K562 (cell line): ENCODE measurements at regions of chr3 and their contacts with region 1.

Region 1: DNA sequence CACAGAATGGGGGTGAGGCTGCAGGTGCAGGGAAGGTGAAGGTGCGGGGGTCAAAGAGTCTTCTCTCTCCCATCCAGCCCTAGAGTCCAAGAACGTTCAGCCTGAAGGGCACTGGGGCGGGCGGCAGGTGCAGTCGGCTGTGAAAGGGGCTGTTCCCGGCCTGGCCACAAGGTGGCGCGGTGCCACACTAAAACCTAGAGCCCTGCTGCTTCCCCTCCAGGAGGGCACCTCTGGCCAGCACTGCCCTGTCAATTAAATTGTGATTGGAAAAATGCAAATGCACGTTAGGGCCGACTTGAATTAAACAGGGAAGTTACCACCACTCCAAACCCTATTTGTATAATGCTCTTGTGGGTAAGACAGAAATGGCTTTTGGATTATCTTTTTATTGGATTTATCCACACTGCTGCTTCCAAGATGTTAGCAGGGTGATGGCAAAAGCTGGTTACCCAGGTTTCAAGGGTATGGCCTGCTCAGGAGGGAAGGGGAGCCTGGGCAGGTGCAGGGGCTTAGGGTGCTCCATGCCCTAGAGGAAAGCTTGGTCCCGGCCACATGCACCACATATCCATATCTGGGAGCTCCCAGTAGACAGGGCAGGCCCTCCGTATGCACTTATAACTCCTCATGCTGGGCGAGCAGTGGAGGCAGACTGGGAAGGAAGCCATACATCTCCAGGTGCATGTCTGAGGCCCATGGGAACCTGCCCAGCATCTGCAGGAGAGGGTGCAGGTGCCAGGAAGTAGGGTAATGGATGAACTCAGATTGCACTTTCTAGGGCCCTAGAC is 119.8 kb downstream of the ADCY5 start:
- DNase-seq: peak; percentile 65 to 70 (median 67)
- ATAC-seq: peak; percentile 96
- H3K4me3 ChIP-seq: no peak overlapping the region
- H3K27ac ChIP-seq: no peak overlapping the region
- H3K4me1 ChIP-seq: peaks cover 0 to 4% of the 10 kb centered on the region in 2 experiments; a peak in 1 of 5 replicates
- H3K27me3 ChIP-seq: peaks cover 0 to 37% of the 10 kb centered on the region in 2 experiments; a peak in 3 of 5 replicates
- CTCF ChIP-seq: peak; percentile 75 to 79 (median 77)
- EP300 ChIP-seq: no peak
- POLR2A ChIP-seq: no peak
- RAD21 ChIP-seq: peak; percentile 61 to 80

Region 2: DNA sequence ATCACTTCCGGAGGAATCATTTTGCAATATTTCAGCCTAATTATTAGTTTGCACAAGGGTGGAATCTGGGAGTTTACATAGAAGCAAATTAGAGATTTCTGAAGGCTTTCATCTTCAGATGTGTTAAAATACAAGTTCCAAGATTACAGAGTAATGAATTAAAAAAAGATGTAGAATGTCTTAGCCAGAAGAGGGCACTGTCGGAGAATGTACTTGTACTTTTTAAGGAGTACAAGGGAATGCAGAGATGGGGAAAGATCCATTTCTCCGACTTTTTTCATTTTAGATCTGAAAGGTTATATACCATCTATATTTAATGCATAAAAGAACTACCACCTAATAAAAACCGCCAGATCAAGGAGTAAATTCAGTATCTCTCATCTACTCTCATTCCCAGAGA is 870.1 kb before region 1 on chr3:
- CTCF ChIA-PET with region 1: no interaction called
- POLR2A ChIA-PET with region 1: no interaction called
- in situ Hi-C with region 1: no loop called
- intact Hi-C with region 1: no loop called
- DNase-seq: peak in 1 of 4 experiments; percentile 15
- ATAC-seq: no peak
- H3K4me3 ChIP-seq: no peak overlapping the region
- H3K27ac ChIP-seq: no peak overlapping the region
- H3K4me1 ChIP-seq: no peaks in the 10 kb centered on the region
- H3K27me3 ChIP-seq: no peaks in the 10 kb centered on the region
- CTCF ChIP-seq: peak in 2 of 3 experiments; percentile 22 to 55; a peak in 3 of 6 replicates
- EP300 ChIP-seq: no peak
- POLR2A ChIP-seq: no peak
- RAD21 ChIP-seq: peak; percentile 32 to 62; a peak in 3 of 4 replicates

Region 3: DNA sequence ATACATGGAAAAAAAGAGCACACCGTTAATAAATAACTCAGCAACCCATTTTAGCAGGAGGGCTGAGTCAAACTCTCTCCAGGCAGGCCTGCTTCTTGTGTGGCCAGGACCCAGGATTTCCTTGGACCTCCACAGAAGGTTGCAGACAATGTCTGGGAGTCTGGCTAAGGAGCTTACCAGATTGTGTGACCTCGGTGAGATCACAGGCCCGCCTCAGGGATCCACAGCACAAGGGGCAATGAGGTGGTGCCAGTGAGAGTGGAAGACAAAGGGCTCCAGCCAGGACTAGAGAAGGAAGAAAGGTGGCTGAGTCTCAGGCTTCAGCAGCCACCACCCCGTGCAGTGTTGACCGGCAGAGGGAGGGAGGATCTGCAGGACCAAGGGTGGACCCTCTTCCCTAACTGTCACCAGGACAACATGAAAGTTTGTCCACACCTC is 159.5 kb before region 1 on chr3:
- CTCF ChIA-PET with region 1: no interaction called
- POLR2A ChIA-PET with region 1: no interaction called
- in situ Hi-C with region 1: no loop called
- intact Hi-C with region 1: no loop called
- DNase-seq: no peak
- ATAC-seq: no peak
- H3K4me3 ChIP-seq: no peak overlapping the region
- H3K27ac ChIP-seq: no peak overlapping the region
- H3K4me1 ChIP-seq: no peaks in the 10 kb centered on the region
- H3K27me3 ChIP-seq: no peaks in the 10 kb centered on the region
- CTCF ChIP-seq: no peak
- EP300 ChIP-seq: no peak
- POLR2A ChIP-seq: no peak
- RAD21 ChIP-seq: no peak

Region 4: GRCh38 chr3:123489400-123490004 is 160.5 kb after region 1 on chr3:
- CTCF ChIA-PET with region 1: interaction called, 13 read pairs
- POLR2A ChIA-PET with region 1: no interaction called
- in situ Hi-C with region 1: loop called (anchors 5 kb)
- intact Hi-C with region 1: loop called (anchors 1 kb)
- DNase-seq: peak; percentile 57 to 73 (median 68)
- ATAC-seq: peak; percentile 85
- H3K4me3 ChIP-seq: no peak overlapping the region
- H3K27ac ChIP-seq: no peak overlapping the region
- H3K4me1 ChIP-seq: no peaks in the 10 kb centered on the region
- H3K27me3 ChIP-seq: peaks cover 0 to 6% of the 10 kb centered on the region in 2 experiments; a peak in 1 of 5 replicates
- CTCF ChIP-seq: peak; percentile 78 to 84 (median 79)
- EP300 ChIP-seq: no peak
- POLR2A ChIP-seq: no peak
- RAD21 ChIP-seq: peak; percentile 71 to 85

Region 5: DNA sequence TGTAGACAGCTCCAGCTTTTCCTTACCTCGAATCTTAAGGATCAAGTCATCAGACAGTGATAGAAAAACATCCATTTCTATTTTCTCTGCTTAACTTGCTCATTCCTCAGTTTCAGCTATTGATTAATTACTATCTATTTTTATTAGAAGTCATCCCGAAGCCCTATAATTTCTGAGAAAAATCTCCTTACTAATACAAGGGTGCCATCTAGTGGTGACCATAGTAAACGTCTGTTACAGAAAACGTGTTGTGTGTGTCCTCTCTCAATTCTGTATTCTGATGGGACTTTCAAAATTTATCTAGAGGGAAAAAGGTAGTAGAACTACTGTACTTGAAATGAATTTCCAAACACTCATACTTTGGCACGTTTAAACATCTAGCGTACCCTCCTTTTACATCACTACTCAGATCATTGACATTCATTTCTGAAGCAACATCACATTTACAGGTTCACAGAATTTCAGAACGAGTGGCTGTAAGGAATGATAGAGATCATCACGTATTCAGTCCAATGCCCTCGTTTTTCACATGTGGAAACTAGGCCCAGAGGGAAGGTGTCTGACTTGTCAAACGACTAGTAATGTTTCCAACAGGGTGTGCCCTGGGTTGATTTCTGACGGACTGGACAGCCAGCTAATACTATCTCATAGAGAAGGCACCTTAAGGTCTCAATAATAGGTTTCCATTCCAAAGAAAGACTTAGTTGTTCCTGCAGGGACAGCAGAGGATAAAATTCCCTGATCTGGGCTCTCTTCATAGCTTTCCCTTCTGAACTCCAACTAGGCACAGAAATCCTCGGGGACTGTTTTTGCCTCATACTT is 230.2 kb after region 1 on chr3:
- CTCF ChIA-PET with region 1: interaction called, 13 read pairs
- POLR2A ChIA-PET with region 1: no interaction called
- in situ Hi-C with region 1: no loop called
- intact Hi-C with region 1: loop called (anchors 2 kb)
- DNase-seq: peak; percentile 28 to 45 (median 38)
- ATAC-seq: no peak
- H3K4me3 ChIP-seq: no peak overlapping the region
- H3K27ac ChIP-seq: no peak overlapping the region
- H3K4me1 ChIP-seq: no peaks in the 10 kb centered on the region; a peak in 1 of 5 replicates
- H3K27me3 ChIP-seq: no peaks in the 10 kb centered on the region
- CTCF ChIP-seq: peak; percentile 14 to 69 (median 36); a peak in 2 of 6 replicates
- EP300 ChIP-seq: no peak
- POLR2A ChIP-seq: no peak
- RAD21 ChIP-seq: peak; percentile 48 to 55